OCI-LY7 (cell line): ENCODE measurements at regions of chr5 and their contacts with region 1.

Region 1: DNA sequence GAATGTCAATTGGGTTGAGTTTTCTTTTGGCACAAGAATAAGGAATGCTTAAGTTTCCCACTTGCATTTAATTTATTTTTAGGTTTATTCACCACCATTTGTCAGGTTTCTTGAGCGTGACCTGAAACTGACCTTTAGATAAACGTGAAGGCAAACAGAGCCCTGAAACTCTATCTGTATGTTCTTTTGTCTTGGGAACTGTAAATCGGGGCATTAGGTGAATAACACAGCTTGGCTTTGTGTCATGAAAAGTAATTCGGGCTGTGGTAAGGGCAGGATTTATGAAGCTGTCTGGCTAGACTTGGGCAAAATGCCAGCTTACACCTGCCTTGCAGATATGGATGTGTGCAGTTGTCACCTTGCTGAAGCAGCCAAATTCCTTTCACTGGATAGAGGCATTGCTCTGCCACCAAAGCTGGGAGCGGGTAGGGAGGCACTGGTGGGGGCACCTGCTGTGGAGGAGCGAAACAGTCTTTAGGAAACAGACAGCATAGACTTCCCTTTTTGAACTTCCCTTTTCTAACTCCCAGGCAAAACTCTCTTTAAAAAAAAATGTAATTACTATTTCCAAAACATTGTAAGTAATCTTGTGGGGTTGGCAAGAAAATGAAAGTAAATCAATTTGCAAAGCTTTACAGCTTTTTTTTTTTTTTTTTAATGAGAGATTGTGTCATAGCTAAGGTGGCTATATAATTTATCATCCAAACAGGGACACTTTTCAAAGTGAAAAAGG is 545.2 kb downstream of the CSNK1G3 start:
- DNase-seq: peak; percentile 80
- H3K4me3 ChIP-seq: peak overlapping the region; percentile 58
- H3K27ac ChIP-seq: peak overlapping the region; percentile 31
- H3K4me1 ChIP-seq: peaks cover 35% of the 10 kb centered on the region
- CTCF ChIP-seq: no peak

Region 2: GRCh38 chr5:123671042-123671441 is 386.1 kb before region 1 on chr5:
- CTCF ChIA-PET with region 1: no interaction called
- POLR2A ChIA-PET with region 1: no interaction called
- intact Hi-C with region 1: loop called (anchors 10 kb)
- DNase-seq: peak; percentile 65
- H3K4me3 ChIP-seq: no peak overlapping the region
- H3K27ac ChIP-seq: no peak overlapping the region
- H3K4me1 ChIP-seq: peaks cover 3% of the 10 kb centered on the region
- CTCF ChIP-seq: peak; percentile 92

Region 3: GRCh38 chr5:124043456-124043855 is 13.7 kb before region 1 on chr5:
- CTCF ChIA-PET with region 1: no interaction called
- POLR2A ChIA-PET with region 1: interaction called, 14 read pairs
- intact Hi-C with region 1: no loop called
- DNase-seq: peak; percentile 27
- H3K4me3 ChIP-seq: no peak overlapping the region
- H3K27ac ChIP-seq: no peak overlapping the region
- H3K4me1 ChIP-seq: no peaks in the 10 kb centered on the region
- CTCF ChIP-seq: peak; percentile 55